Left cardiac atrium (tissue), 4 donors: ENCODE measurements at regions of chr1 and their contacts with region 1.

Region 1: GRCh38 chr1:24847995-24848881 is 81.8 kb downstream of the RUNX3 start:
- DNase-seq: peak; percentile 94
- ATAC-seq: peak; percentile 94 to 95

Region 2: GRCh38 chr1:24897767-24898483 is 49.7 kb after region 1 on chr1:
- intact Hi-C with region 1: loop called (anchors 2 to 10 kb)
- DNase-seq: peak; percentile 47
- ATAC-seq: peak; percentile 54 to 63

Region 3: GRCh38 chr1:24909388-24909898 is 61.2 kb after region 1 on chr1:
- intact Hi-C with region 1: loop called in 1 of 2 experiments (anchors 10 kb)
- DNase-seq: peak; percentile 72
- ATAC-seq: peak; percentile 66 to 71

Region 4: DNA sequence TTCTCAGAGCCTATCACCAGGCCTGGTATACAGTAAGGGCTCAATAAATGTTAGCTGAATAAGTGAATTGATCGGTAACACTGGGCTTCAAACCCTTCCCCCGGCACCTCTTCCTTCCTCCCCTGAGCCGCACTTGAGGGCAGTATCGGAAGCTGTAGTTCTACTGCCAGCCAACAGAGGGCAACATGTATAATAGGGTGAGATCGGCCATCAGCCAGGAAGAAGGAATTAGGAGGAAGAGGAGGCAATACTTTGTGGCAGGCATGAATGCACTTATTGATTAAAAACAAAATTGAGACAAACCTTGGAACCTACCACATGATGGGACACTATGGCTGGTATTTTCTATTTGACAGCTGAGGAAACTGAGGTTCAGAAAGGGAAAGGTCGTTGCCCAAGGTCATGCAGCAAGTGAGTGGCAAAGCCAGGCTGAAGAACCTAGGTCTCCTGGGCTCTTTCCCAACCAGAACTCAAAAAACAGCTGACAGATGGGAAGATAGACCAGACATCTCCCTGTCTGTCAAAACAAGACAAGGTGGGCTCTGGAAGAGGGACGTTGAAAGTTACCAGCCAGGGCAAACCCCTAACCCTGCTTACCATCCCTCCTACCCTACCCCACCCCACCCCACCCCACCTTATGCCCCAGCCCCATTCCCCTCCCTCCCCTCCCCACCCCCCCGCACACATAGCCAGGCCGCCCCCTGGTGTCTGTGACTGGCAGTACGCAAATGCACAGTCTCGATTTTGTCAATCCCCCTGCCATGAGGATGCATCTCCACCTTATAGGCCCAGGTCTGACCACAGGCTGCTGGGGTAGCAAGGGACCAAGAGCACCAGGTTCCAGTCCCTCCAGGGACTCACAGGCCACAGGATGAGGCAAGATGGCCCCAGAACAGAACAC is 189.2 kb after region 1 on chr1:
- intact Hi-C with region 1: loop called in 1 of 2 experiments (anchors 5 kb)
- DNase-seq: no peak
- ATAC-seq: peak in 1 of 2 donors; percentile 15

Region 5: GRCh38 chr1:25103164-25103795 is 255.0 kb after region 1 on chr1:
- intact Hi-C with region 1: loop called in 1 of 2 experiments (anchors 5 kb)
- DNase-seq: no peak
- ATAC-seq: no peak

Region 6: GRCh38 chr1:25204797-25205480 is 356.7 kb after region 1 on chr1:
- intact Hi-C with region 1: loop called (anchors 2 to 10 kb)
- DNase-seq: no peak
- ATAC-seq: peak; percentile 34 to 44